ENCODE measurements at regions of chr9 and their contacts with region 1.

Region 1: GRCh38 chr9:107755284-107755683 is 265.7 kb upstream of the KLF4 start:
- DNase-seq: peak; percentile 87
- H3K4me3 ChIP-seq: no peak overlapping the region
- H3K27ac ChIP-seq: peak overlapping the region; percentile 68
- H3K4me1 ChIP-seq: peaks cover 45% of the 10 kb centered on the region
- H3K27me3 ChIP-seq: no peaks in the 10 kb centered on the region
- CTCF ChIP-seq: no peak
- POLR2A ChIP-seq: no peak

Region 2: GRCh38 chr9:107504569-107505377 is 250.5 kb before region 1 on chr9:
- CTCF ChIA-PET with region 1: no interaction called
- POLR2A ChIA-PET with region 1: no interaction called
- dilution Hi-C with region 1: no loop called
- intact Hi-C with region 1: loop called (anchors 1 kb)
- DNase-seq: peak; percentile 87
- H3K4me3 ChIP-seq: no peak overlapping the region
- H3K27ac ChIP-seq: peak overlapping the region; percentile 48
- H3K4me1 ChIP-seq: peaks cover 15% of the 10 kb centered on the region
- H3K27me3 ChIP-seq: no peaks in the 10 kb centered on the region
- CTCF ChIP-seq: no peak
- POLR2A ChIP-seq: peak; percentile 29

Region 3: GRCh38 chr9:107644733-107645463 is 110.4 kb before region 1 on chr9:
- CTCF ChIA-PET with region 1: no interaction called
- POLR2A ChIA-PET with region 1: no interaction called
- dilution Hi-C with region 1: no loop called
- intact Hi-C with region 1: loop called (anchors 1 kb)
- DNase-seq: peak; percentile 86
- H3K4me3 ChIP-seq: no peak overlapping the region
- H3K27ac ChIP-seq: peak overlapping the region; percentile 6
- H3K4me1 ChIP-seq: peaks cover 10% of the 10 kb centered on the region
- H3K27me3 ChIP-seq: peaks cover 0 to 1% of the 10 kb centered on the region in 2 experiments
- CTCF ChIP-seq: no peak
- POLR2A ChIP-seq: no peak

Region 4: DNA sequence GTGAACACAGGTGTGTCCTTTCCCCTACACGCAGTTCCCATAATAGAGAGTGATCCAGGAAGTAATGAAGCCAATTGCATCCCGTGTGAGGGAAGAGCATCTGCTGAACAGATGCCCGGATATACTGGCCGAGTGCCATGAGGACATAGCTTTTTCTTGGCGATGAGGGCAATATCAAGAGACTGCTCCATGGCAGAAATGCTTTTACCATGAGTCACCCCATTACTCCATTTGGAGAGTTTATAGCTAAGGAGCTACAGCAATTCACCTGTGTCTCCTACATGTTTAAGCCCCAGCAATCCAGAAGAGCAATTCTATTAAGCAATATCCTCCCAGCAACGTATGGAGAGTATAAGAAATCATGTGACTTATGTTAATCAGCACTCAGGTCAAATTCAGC is 43.7 kb before region 1 on chr9:
- CTCF ChIA-PET with region 1: interaction called, 6 read pairs
- POLR2A ChIA-PET with region 1: interaction called, 3 read pairs
- dilution Hi-C with region 1: no loop called
- intact Hi-C with region 1: loop called (anchors 1 kb)
- DNase-seq: peak; percentile 80
- H3K4me3 ChIP-seq: no peak overlapping the region
- H3K27ac ChIP-seq: no peak overlapping the region
- H3K4me1 ChIP-seq: peaks cover 16% of the 10 kb centered on the region
- H3K27me3 ChIP-seq: peaks cover 14 to 26% of the 10 kb centered on the region in 2 experiments
- CTCF ChIP-seq: no peak
- POLR2A ChIP-seq: no peak

Region 5: DNA sequence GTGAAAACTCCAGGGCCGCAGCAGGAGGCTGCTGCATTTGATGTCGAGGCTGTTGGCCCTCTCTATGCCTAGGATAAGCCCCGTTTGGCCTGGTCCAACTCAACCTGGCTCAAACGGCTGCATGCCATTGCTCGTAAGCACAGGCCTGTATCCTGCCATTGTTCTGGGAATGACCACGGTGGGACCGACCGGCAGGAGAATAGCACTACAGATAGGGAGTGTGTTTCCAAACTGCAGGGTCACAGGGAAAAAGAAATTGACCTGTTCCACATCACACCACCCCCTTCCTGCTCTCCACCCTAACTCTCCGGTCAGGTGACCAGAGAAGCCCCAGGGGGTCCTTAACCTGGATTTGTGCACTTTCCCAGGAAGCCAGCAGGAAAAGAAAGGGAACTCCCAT is 12.9 kb after region 1 on chr9:
- CTCF ChIA-PET with region 1: no interaction called
- POLR2A ChIA-PET with region 1: no interaction called
- dilution Hi-C with region 1: no loop called
- intact Hi-C with region 1: loop called (anchors 1 kb)
- DNase-seq: peak; percentile 59
- H3K4me3 ChIP-seq: no peak overlapping the region
- H3K27ac ChIP-seq: no peak overlapping the region
- H3K4me1 ChIP-seq: peaks cover 6% of the 10 kb centered on the region
- H3K27me3 ChIP-seq: no peaks in the 10 kb centered on the region
- CTCF ChIP-seq: no peak
- POLR2A ChIP-seq: no peak

Measured in endothelial cell of umbilical vein (primary cell).